ENCODE measurements at regions of chr21 and their contacts with region 1.

Region 1: DNA sequence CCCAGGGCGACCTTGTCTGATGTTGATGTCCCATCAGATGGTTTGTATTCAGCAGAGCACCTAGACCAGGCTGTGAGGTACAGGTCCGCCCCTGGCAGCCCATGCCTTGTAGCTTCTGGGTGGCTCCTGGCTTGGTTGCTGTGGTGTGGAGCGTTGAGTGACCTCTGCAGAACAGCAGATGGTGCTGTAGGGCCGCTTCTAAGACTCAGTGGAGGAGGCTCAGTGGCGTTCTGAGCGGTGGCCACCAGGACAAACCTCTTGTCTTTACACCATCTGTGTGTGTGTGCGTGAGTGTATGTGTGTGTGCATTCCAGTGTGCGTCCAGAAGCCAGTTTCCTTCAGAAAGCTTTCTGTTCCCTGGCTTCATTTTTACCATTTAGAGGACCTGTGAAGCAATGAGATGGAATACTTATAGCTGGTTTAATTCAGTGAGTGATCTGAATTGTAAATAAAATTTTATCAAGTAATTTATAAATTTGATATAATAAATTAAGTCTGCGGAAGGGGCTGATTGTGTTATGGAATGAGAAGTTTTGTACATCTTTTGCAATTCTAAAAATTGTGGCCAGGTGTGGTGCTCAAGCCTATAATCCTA is 66.1 kb downstream of the ADARB1 start:
- DNase-seq: peak; percentile 88
- ATAC-seq: peak; percentile 96
- H3K4me3 Mint-ChIP-seq: no peak overlapping the region
- H3K27ac Mint-ChIP-seq: no peak overlapping the region
- H3K4me1 Mint-ChIP-seq: peaks cover 7% of the 10 kb centered on the region
- H3K27me3 Mint-ChIP-seq: no peaks in the 10 kb centered on the region

Region 2: DNA sequence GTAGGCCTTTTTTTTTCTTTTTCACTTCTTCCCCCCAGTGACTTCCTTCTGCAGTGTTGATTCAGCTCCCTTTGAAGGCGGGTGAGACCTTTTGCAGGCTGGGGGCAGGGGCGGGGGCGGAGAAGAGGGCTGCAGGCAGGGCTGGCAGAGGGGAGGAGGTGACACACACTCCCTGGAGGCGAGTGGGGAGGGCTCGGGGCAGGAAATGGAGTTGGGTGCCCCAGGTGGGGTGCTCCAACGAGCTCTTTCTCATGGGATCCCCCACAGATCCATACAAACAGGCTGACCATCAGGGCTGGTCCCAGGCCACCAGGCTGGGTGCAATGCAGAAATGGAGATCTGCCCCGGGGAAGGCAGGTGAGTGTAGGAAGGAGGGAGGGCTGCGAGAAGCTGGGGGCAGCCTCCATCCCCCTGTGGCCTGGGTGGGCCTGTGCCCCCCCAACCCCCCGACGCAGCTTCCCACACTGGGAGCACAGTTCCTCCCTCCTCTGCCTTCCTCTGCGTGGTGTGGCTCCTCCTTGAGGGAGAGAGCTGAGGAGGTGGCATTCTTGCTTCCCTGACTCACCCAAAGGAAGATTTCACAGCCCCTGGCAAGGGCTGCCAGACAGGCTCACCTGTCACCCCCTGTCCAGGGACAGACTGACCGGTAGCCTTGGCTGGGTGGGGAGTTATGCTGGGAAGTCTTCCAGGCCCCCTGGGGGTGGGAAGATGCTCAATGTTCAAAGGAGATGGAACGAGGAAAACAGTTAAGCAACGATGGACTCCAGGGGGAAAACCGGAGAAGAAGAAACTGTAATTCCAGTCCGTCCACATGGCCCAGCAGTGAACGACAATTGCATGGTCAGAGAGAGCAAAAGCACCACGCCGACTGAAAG is 212.6 kb before region 1 on chr21:
- CTCF ChIA-PET with region 1: interaction called, 14 read pairs
- DNase-seq: peak; percentile 91
- ATAC-seq: peak; percentile 60
- H3K4me3 Mint-ChIP-seq: peak overlapping the region; percentile 72
- H3K27ac Mint-ChIP-seq: peak overlapping the region; percentile 93
- H3K4me1 Mint-ChIP-seq: peaks cover 78% of the 10 kb centered on the region
- H3K27me3 Mint-ChIP-seq: no peaks in the 10 kb centered on the region

Region 3: GRCh38 chr21:45055861-45056260 is 84.6 kb before region 1 on chr21:
- CTCF ChIA-PET with region 1: interaction called, 16 read pairs
- DNase-seq: no peak
- ATAC-seq: no peak
- H3K4me3 Mint-ChIP-seq: no peak overlapping the region
- H3K27ac Mint-ChIP-seq: no peak overlapping the region
- H3K4me1 Mint-ChIP-seq: no peaks in the 10 kb centered on the region
- H3K27me3 Mint-ChIP-seq: peaks cover 10% of the 10 kb centered on the region

Region 4: GRCh38 chr21:45098867-45099266 is 41.6 kb before region 1 on chr21:
- CTCF ChIA-PET with region 1: interaction called, 13 read pairs
- DNase-seq: no peak
- ATAC-seq: peak; percentile 33
- H3K4me3 Mint-ChIP-seq: no peak overlapping the region
- H3K27ac Mint-ChIP-seq: no peak overlapping the region
- H3K4me1 Mint-ChIP-seq: peaks cover 15% of the 10 kb centered on the region
- H3K27me3 Mint-ChIP-seq: no peaks in the 10 kb centered on the region

Region 5: DNA sequence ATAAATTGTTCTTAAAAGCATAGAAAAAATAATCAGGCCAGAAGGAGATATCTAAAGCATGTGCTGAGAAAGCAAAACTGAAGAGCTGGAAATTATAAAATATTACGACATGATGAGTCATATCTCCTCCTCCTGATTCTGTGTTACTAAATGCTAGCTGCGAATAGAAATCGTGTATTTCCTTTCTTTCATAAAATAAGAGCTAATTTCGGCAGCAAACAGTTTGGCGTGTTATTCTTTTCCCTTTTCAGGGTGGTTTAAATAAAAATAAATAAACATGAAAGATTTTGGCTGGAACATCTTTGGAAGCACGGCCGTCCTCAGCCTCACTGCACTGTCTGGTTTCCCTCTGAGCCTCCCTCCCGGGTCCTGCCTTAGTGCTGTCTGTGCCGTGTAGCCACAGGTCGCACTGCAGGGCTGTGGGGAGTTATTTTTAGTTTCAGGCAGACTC is 10.1 kb before region 1 on chr21:
- CTCF ChIA-PET with region 1: interaction called, 135 read pairs
- DNase-seq: no peak
- ATAC-seq: peak; percentile 57
- H3K4me3 Mint-ChIP-seq: no peak overlapping the region
- H3K27ac Mint-ChIP-seq: no peak overlapping the region
- H3K4me1 Mint-ChIP-seq: peaks cover 20% of the 10 kb centered on the region
- H3K27me3 Mint-ChIP-seq: no peaks in the 10 kb centered on the region

Region 6: DNA sequence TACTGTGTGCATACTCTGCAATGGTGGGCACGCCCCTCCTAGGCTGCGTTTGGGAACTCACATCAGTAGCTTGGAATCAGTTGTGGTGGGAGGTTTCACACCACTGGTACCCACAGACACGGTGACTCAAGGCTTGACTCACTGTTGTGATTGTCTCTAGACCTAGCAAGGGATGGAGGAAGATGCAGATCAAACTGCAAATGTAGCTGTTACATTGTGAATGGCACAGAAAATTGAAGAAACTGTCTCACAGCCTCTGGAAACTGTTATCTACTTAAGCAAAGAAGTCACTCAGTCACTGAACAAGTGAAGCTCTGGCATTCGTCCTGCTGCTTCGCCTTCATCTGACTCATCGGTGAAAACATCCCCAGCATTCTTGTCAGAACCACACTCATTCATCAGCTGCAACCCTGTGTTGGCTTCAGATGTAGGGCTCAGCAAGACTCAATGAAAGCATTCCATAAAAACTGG is 87.8 kb after region 1 on chr21:
- CTCF ChIA-PET with region 1: interaction called, 11 read pairs
- DNase-seq: peak; percentile 95
- ATAC-seq: peak; percentile 85
- H3K4me3 Mint-ChIP-seq: peak overlapping the region; percentile 12
- H3K27ac Mint-ChIP-seq: peak overlapping the region; percentile 73
- H3K4me1 Mint-ChIP-seq: peaks cover 65% of the 10 kb centered on the region
- H3K27me3 Mint-ChIP-seq: peaks cover 30% of the 10 kb centered on the region

Region 7: GRCh38 chr21:45330075-45330781 is 189.8 kb after region 1 on chr21:
- CTCF ChIA-PET with region 1: no interaction called
- DNase-seq: no peak
- ATAC-seq: no peak
- H3K4me3 Mint-ChIP-seq: no peak overlapping the region
- H3K27ac Mint-ChIP-seq: no peak overlapping the region
- H3K4me1 Mint-ChIP-seq: no peaks in the 10 kb centered on the region
- H3K27me3 Mint-ChIP-seq: no peaks in the 10 kb centered on the region

Region 8: GRCh38 chr21:45439161-45439872 is 298.9 kb after region 1 on chr21:
- CTCF ChIA-PET with region 1: interaction called, 49 read pairs
- DNase-seq: peak; percentile 87
- ATAC-seq: peak; percentile 93
- H3K4me3 Mint-ChIP-seq: peak overlapping the region; percentile 60
- H3K27ac Mint-ChIP-seq: peak overlapping the region; percentile 68
- H3K4me1 Mint-ChIP-seq: peaks cover 7% of the 10 kb centered on the region
- H3K27me3 Mint-ChIP-seq: peaks cover 2% of the 10 kb centered on the region

Measured in activated CD8-positive, alpha-beta memory T cell treated with anti-CD3 and anti-CD28 coated beads, Interleukin-2, amount 10 ng/mL, durations not matched to agents 7 days and 5 days (primary cell).